ENCODE measurements at regions of chr20 and their contacts with region 1.

Region 1: DNA sequence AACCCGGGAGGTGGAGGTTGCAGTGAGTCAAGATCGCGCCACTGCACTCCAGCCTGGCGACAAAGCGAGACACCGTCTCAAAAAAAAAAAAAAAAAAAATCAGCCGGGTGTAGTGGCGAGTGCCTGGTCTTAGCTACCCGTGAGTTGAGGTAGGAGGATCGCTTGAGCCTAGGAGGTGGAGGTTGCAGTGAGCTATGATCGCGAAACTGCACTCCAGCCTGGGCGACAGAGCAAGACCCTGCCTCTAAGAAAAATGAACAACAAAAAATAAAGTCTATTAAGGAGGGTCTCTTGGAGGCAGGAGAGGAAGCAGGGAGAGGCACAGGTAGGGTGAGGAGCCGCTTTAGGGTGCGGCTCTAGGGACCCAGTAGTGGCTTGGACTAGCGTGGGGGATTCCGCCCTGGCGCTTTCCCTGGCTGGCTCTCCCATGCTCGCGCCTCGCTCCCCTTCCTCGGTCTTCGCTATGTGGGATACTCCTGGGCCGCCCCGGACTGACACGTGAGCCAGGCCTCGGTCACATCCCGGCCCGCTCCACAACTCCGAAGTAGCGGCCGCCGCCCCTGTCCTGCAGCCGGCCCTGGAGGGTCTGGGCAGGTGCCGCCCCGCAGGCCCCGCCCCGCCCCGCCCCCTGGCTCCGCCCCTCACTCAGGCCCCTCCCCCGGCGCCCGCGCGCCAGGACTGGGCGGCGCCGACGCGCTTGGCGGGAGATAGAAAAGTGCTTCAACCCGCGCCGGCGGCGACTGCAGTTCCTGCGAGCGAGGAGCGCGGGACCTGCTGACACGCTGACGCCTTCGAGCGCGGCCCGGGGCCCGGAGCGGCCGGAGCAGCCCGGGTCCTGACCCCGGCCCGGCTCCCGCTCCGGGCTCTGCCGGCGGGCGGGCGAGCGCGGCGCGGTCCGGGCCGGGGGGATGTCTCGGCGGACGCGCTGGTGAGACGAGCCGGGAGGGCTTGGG is at the start of gene MYBL2:
- DNase-seq: peak; percentile 70
- ATAC-seq: peak; percentile 92
- H3K4me3 ChIP-seq: peak within 1 kb of the TSS; percentile 63 to 86 (median 70)
- H3K27ac ChIP-seq: no peak within 1 kb of the TSS
- H3K4me1 ChIP-seq: peaks cover 54% of the 10 kb centered on the region
- H3K27me3 ChIP-seq: no peaks in the 10 kb centered on the region; a peak in 1 of 5 replicates
- CTCF ChIP-seq: no peak
- EP300 ChIP-seq: no peak
- POLR2A ChIP-seq: peak; percentile 74 to 84
- RAD21 ChIP-seq: no peak
- total RNA-seq, gene MYBL2: 66.2 and 76.9 TPM in 2 replicates

Region 2: GRCh38 chr20:44324343-44324742 is 657.7 kb after region 1 on chr20:
- CTCF ChIA-PET with region 1: no interaction called
- POLR2A ChIA-PET with region 1: no interaction called
- in situ Hi-C with region 1: no loop called
- intact Hi-C with region 1: loop called (anchors 5 kb)
- DNase-seq: no peak
- ATAC-seq: peak; percentile 54
- H3K4me3 ChIP-seq: no peak overlapping the region
- H3K27ac ChIP-seq: no peak overlapping the region
- H3K4me1 ChIP-seq: peaks cover 43% of the 10 kb centered on the region
- H3K27me3 ChIP-seq: no peaks in the 10 kb centered on the region; a peak in 1 of 5 replicates
- CTCF ChIP-seq: no peak; the same call in 1 of the 2 replicates
- EP300 ChIP-seq: no peak
- POLR2A ChIP-seq: no peak
- RAD21 ChIP-seq: no peak

Measured in HepG2 (cell line).